ENCODE measurements at regions of chr15 and their contacts with region 1.

Region 1: GRCh38 chr15:100341662-100342560 is at the start of gene ADAMTS17:
- H3K4me3 ChIP-seq: peak within 1 kb of the TSS; percentile 72
- H3K27ac ChIP-seq: peak within 1 kb of the TSS; percentile 78; the same call in 1 of the 2 replicates
- H3K4me1 ChIP-seq: peaks cover 5% of the 10 kb centered on the region; the same call in 1 of the 2 replicates
- CTCF ChIP-seq: peak; percentile 95

Region 2: DNA sequence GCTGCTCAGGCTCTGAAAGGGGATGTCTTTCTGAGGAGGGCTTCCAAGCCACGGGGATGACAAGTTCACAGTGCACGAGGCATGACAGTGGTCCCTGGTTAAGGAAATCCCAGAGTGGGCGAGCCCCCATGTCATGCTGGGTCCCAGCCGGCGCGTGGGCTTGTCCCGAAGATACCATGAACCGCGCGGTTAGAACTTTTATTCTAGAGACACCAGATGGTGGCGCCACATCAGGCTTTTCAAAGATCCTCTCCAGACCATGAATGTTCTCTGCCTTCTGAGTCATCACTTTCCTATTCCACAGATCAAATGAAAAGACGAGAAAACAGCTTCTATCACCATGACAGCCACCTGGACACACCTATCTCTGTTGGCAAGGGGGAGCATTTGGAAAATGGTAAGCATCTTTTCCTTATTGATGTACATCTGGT is 380.9 kb before region 1 on chr15:
- CTCF ChIA-PET with region 1: interaction called, 19 read pairs
- POLR2A ChIA-PET with region 1: no interaction called
- H3K4me3 ChIP-seq: no peak overlapping the region
- H3K27ac ChIP-seq: no peak overlapping the region
- H3K4me1 ChIP-seq: no peaks in the 10 kb centered on the region
- CTCF ChIP-seq: no peak

Region 3: DNA sequence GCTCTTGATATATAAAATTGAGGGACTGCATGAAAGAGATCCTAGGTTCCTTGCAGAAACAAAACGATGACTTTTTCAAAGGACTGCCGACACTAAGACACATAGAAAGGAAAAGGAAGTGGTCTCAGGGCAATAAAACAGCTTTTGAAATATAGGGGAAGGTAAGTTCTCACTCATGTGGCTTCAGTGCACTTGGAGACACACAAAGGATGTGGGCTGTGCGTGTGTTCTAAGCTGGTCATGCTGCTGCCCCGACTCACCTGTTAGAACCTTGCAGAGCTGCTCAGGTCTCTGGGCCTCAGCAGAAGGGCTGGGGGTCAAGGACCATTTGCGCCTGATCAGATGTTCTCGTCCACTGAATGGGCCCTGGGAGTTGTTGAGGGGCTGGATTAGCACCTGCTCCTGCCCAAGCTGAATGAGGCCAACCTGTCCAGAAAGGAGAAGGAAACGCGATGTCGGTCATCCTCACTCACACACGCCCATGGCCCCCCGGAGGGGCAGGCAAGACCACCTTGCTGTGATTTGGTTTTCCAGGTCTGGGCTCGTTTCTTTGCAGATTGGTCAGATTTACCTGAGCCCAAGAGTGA is 11.2 kb before region 1 on chr15:
- CTCF ChIA-PET with region 1: interaction called, 21 read pairs
- POLR2A ChIA-PET with region 1: no interaction called
- H3K4me3 ChIP-seq: no peak overlapping the region
- H3K27ac ChIP-seq: no peak overlapping the region
- H3K4me1 ChIP-seq: no peaks in the 10 kb centered on the region
- CTCF ChIP-seq: no peak

Region 4: DNA sequence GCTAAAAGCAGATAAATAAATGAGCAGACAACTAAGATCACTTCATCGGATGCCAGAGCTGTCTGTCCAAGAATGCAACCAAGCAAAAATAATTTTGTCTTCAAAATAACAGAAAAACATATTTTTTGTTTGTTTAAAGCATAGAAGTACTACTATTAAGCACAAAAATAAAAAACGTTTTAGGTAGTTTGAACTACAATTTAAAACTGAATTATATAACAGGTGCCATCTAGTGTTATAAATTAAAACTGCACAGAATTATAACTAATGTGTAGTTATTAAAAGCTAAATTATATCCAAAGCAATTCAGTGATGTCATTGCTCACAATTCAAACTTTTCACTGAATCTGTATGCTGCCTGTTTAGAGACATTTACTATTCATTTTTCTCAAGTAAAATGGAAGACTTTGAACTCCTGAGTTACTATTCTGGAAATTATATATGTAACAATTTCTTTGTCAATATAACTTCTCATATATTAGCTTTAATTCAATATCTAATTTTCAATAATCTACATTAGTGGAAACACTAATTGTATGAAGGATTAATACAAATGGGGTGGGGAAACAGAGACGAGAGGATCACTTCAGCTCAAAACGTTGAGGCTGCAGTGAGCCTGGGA is 230.6 kb after region 1 on chr15:
- CTCF ChIA-PET with region 1: interaction called, 11 read pairs
- POLR2A ChIA-PET with region 1: interaction called, 4 read pairs
- H3K4me3 ChIP-seq: no peak overlapping the region
- H3K27ac ChIP-seq: no peak overlapping the region
- H3K4me1 ChIP-seq: no peaks in the 10 kb centered on the region
- CTCF ChIP-seq: no peak

Measured in HEK293 (cell line).